ENCODE measurements at regions of chr1 and their contacts with region 1.

Region 1: GRCh38 chr1:174953285-174954072 is 46.3 kb upstream of the CACYBP start:
- DNase-seq: no peak
- ATAC-seq: peak; percentile 72
- H3K4me3 ChIP-seq: no peak overlapping the region
- H3K4me3 Mint-ChIP-seq: peak overlapping the region; percentile 83
- H3K27ac ChIP-seq: peak overlapping the region; percentile 45 to 76
- H3K27ac Mint-ChIP-seq: peak overlapping the region; percentile 85
- H3K4me1 ChIP-seq: peaks cover 27 to 37% of the 10 kb centered on the region in 2 donors
- H3K4me1 Mint-ChIP-seq: peaks cover 51% of the 10 kb centered on the region
- H3K27me3 ChIP-seq: no peaks in the 10 kb centered on the region
- H3K27me3 Mint-ChIP-seq: no peaks in the 10 kb centered on the region
- CTCF ChIP-seq: no peak

Region 2: DNA sequence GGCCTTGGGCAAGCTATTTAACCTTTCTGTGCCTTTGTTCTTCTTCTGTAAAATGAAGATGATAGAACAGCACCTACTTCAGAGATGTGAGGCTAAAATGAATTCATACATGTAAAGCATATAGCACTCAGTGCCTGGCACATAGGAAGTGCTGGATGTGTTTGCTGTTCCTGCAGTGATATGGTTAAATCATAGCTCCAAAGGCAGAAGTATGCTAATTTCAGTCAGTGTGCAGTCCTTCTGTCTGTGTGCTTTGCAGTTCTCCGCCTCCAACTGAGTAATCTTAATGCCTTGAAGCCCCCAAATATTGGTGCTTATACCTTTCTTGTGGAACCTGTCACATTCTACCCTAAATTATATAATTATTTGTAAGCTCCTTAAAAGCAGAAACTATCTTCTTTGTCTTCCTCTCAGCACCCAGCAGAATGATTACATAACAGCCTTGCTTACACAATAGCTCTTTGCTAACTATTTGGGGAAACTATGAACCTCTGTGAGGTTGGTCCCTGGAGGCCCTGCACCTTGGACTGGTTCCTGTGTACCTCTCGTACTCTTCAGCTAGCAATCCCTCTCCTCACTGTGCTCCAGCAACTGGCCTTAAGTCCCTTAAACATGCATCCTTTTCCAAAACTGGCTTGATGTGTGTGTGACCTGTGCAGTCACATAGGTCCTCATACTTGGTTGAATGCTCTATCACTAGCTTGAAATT is 10.8 kb before region 1 on chr1:
- CTCF ChIA-PET with region 1: no interaction called
- POLR2A ChIA-PET with region 1: no interaction called
- intact Hi-C with region 1: loop called (anchors 2 kb)
- DNase-seq: peak; percentile 22
- ATAC-seq: peak; percentile 76
- H3K4me3 ChIP-seq: no peak overlapping the region
- H3K4me3 Mint-ChIP-seq: no peak overlapping the region
- H3K27ac ChIP-seq: no peak overlapping the region
- H3K27ac Mint-ChIP-seq: peak overlapping the region; percentile 72
- H3K4me1 ChIP-seq: peaks cover 4 to 9% of the 10 kb centered on the region in 2 donors
- H3K4me1 Mint-ChIP-seq: peaks cover 23% of the 10 kb centered on the region
- H3K27me3 ChIP-seq: no peaks in the 10 kb centered on the region
- H3K27me3 Mint-ChIP-seq: no peaks in the 10 kb centered on the region
- CTCF ChIP-seq: no peak

Region 3: GRCh38 chr1:174968750-174969244 is 15.3 kb after region 1 on chr1:
- CTCF ChIA-PET with region 1: interaction called, 10 read pairs
- POLR2A ChIA-PET with region 1: interaction called, 8 read pairs
- intact Hi-C with region 1: loop called (anchors 1 kb)
- DNase-seq: peak; percentile 41
- ATAC-seq: peak; percentile 58
- H3K4me3 ChIP-seq: peak overlapping the region in 1 of 5 experiments; percentile 0
- H3K4me3 Mint-ChIP-seq: peak overlapping the region; percentile 82
- H3K27ac ChIP-seq: peak overlapping the region; percentile 38 to 63
- H3K27ac Mint-ChIP-seq: peak overlapping the region; percentile 90
- H3K4me1 ChIP-seq: peaks cover 47 to 55% of the 10 kb centered on the region in 2 donors
- H3K4me1 Mint-ChIP-seq: peaks cover 59% of the 10 kb centered on the region
- H3K27me3 ChIP-seq: no peaks in the 10 kb centered on the region
- H3K27me3 Mint-ChIP-seq: no peaks in the 10 kb centered on the region
- CTCF ChIP-seq: no peak

Region 4: GRCh38 chr1:174990382-174990999 is 37.0 kb after region 1 on chr1:
- CTCF ChIA-PET with region 1: no interaction called
- POLR2A ChIA-PET with region 1: no interaction called
- intact Hi-C with region 1: no loop called
- DNase-seq: peak; percentile 58
- ATAC-seq: peak; percentile 64
- H3K4me3 ChIP-seq: peak overlapping the region; percentile 37 to 66 (median 53)
- H3K4me3 Mint-ChIP-seq: peak overlapping the region; percentile 86
- H3K27ac ChIP-seq: peak overlapping the region; percentile 87 to 90
- H3K27ac Mint-ChIP-seq: peak overlapping the region; percentile 89
- H3K4me1 ChIP-seq: peaks cover 11 to 15% of the 10 kb centered on the region in 2 donors
- H3K4me1 Mint-ChIP-seq: peaks cover 20% of the 10 kb centered on the region
- H3K27me3 ChIP-seq: no peaks in the 10 kb centered on the region
- H3K27me3 Mint-ChIP-seq: no peaks in the 10 kb centered on the region
- CTCF ChIP-seq: no peak

Measured in B cell (primary cell).